GM10248 (cell line): ENCODE measurements at regions of chr3 and their contacts with region 1.

Region 1: GRCh38 chr3:159988617-159989271 is at the start of gene IL12A:
- DNase-seq: peak; percentile 91
- CTCF ChIP-seq: peak; percentile 95

Region 2: GRCh38 chr3:159897331-159898075 is 91.2 kb before region 1 on chr3:
- CTCF ChIA-PET with region 1: interaction called, 19 read pairs
- POLR2A ChIA-PET with region 1: no interaction called
- DNase-seq: no peak
- CTCF ChIP-seq: no peak

Region 3: GRCh38 chr3:159919873-159920272 is 68.9 kb before region 1 on chr3:
- CTCF ChIA-PET with region 1: interaction called, 17 read pairs
- POLR2A ChIA-PET with region 1: no interaction called
- DNase-seq: no peak
- CTCF ChIP-seq: no peak

Region 4: DNA sequence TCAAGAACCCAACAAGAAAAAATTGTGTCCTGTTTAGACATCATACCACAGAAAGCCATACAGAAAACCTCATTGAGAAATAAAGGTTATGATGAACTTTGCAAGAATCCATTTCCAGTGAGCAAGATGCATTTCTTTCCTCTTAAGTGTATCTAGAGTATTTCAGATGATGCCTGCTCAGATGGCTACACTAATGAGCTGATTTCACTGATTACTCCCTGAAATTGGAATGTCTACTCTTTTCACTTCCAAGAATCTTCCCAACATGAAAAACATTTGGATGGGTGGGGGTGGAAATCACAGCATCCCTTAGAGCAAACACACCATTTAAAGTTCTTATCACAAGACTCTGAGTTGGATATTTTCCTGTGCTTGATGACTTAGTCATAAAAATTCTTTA is 41.5 kb before region 1 on chr3:
- CTCF ChIA-PET with region 1: interaction called, 17 read pairs
- POLR2A ChIA-PET with region 1: no interaction called
- DNase-seq: no peak
- CTCF ChIP-seq: no peak

Region 5: DNA sequence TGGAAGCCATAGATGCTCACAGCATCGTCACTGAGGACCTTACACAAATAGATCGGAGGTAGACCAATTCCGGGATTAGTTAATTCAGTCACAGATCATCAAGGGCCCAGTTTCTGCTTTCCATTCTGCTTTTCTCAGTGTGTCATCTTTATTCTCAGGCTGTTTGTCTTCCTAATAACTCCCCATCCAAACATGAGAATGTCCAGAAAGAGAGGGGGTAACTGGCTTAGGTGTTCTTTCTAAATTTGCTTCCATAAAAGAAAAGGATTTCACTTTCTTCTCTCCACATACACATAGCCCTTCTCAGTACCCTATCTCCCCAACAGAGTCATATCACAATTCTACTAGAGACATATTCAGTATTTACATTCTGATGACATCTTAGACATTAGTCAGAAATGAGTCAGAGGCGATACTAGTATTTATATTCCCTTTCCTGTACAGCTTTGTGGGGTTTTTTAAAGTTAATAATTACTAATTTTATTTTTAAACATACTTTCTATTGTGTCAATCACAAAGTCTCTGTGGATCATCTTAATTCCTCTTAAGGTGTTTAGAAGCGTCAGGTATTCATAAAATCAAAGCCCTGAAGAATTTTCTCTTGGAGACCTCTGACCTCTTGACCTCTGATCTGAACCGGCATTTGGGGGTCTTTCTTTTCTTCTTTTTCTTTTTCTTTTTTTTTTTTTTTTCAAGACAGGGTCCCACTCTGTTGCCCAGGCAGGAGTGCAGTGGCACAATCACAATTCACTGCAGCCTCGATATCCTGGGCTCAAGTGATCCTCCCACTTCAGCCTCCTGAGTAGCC is 24.4 kb before region 1 on chr3:
- CTCF ChIA-PET with region 1: interaction called, 19 read pairs
- POLR2A ChIA-PET with region 1: no interaction called
- DNase-seq: peak; percentile 73
- CTCF ChIP-seq: no peak

Region 6: GRCh38 chr3:159978353-159978752 is 10.4 kb before region 1 on chr3:
- CTCF ChIA-PET with region 1: interaction called, 76 read pairs
- POLR2A ChIA-PET with region 1: no interaction called
- DNase-seq: peak; percentile 28
- CTCF ChIP-seq: no peak

Region 7: DNA sequence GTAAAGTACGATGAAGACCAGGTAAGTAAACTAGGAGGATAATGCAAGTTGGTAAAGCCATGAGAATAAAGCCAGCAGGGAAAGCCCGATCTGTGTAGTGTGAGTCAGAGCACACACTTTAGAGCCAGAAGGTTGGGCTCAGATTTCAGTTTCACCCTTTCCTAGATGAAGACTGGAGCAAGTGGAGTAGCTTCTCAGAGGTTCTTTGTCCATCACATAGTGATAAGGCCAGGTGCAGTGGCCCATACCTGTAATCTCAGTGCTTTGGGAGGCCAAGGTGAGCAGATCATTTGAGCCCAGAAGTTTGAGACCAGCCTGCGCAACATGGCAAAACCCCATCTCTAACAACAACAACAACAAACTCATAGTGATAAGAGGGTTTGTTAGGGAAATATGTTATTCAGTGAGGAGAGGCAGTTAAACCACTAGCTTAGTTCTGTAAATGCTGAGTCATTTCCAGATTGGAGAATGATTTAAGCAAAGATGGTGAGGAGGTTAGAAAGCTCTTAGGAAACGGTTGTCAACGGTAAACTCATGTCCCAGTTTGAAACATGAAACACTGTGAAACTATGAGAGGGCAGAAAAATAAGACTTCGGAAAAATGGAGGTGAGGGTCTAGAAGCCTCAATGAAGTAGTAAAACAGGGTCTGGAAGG is 38.9 kb after region 1 on chr3:
- CTCF ChIA-PET with region 1: interaction called, 11 read pairs
- POLR2A ChIA-PET with region 1: no interaction called
- DNase-seq: peak; percentile 53
- CTCF ChIP-seq: no peak